Mammary epithelial cell (primary cell): ENCODE measurements at regions of chr11 and their contacts with region 1.

Region 1: DNA sequence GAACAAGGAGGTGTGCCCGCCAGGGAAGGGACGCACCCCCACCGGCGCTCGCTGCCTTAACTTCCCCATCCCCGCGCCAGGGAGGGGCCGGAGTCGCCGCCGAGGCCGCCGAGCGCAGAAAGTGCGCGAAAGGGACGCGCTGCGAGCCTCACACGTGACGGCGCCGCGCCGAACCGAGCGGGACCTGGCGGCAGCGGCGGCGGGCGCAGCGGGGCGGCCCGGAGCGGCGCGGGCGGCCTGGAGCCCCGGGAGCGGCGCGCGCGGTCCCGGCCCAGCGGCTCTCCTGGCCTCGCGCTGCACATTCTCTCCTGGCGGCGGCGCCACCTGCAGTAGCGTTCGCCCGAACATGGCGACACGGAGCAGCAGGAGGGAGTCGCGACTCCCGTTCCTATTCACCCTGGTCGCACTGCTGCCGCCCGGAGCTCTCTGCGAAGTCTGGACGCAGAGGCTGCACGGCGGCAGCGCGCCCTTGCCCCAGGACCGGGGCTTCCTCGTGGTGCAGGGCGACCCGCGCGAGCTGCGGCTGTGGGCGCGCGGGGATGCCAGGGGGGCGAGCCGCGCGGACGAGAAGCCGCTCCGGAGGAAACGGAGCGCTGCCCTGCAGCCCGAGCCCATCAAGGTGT is at the start of gene SORL1:
- DNase-seq: peak; percentile 67
- H3K4me3 ChIP-seq: peak within 1 kb of the TSS; percentile 59 to 79 (median 77)
- H3K27ac ChIP-seq: peak within 1 kb of the TSS; percentile 5
- H3K4me1 ChIP-seq: peaks cover 9% of the 10 kb centered on the region
- H3K27me3 ChIP-seq: no peaks in the 10 kb centered on the region
- CTCF ChIP-seq: peak; percentile 54 to 77
- total RNA-seq, gene SORL1: 17.5 to 84.3 TPM

Region 2: GRCh38 chr11:121318848-121319834 is 133.0 kb before region 1 on chr11:
- CTCF ChIA-PET with region 1: no interaction called
- dilution Hi-C with region 1: no loop called
- in situ Hi-C with region 1: loop called in 1 of 2 experiments (anchors 10 kb)
- intact Hi-C with region 1: loop called (anchors 1 kb)
- DNase-seq: peak; percentile 49
- H3K4me3 ChIP-seq: no peak overlapping the region
- H3K27ac ChIP-seq: no peak overlapping the region
- H3K4me1 ChIP-seq: peaks cover 4% of the 10 kb centered on the region
- H3K27me3 ChIP-seq: no peaks in the 10 kb centered on the region
- CTCF ChIP-seq: peak; percentile 79 to 89

Region 3: DNA sequence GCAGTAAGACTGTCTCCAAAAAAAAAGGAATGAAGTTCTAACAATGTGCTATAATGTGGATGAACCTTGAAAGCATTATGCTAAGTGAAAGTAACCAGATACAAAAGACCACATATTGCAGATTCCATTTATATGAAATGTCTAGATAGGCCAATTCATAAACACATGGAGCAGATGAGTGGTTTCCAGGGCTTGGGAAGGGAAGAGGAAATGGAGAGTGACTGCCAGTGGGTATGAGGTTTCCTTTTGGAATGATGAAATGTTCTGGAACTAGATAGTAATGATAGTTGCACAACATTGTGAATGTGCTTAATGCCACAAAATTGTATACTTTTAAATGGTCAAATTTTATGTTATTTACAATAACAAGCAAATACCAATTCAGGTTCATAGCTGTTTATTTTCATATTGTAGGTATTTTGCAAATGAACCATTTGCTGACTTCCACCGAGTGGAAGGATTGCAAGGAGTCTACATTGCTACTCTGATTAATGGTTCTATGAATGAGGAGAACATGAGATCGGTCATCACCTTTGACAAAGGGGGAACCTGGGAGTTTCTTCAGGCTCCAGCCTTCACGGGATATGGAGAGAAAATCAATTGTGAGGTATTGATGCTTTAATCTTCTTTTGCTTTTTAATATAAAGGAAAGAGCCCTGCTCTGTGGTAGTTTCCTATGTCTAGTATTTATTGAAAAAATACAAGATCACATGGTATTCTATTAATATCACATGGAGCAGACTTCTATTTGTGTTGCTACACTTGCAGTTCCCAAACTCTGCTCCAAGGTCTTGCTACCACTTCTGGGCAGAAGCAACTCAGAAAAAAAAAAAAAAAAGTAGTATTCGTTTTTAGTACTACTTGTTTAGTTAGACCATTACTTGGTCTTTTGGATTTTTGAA is 68.4 kb after region 1 on chr11:
- CTCF ChIA-PET with region 1: no interaction called
- dilution Hi-C with region 1: no loop called
- in situ Hi-C with region 1: no loop called
- intact Hi-C with region 1: loop called (anchors 2 kb)
- DNase-seq: peak; percentile 68
- H3K4me3 ChIP-seq: no peak overlapping the region
- H3K27ac ChIP-seq: peak overlapping the region; percentile 86
- H3K4me1 ChIP-seq: peaks cover 29% of the 10 kb centered on the region
- H3K27me3 ChIP-seq: no peaks in the 10 kb centered on the region
- CTCF ChIP-seq: no peak

Region 4: DNA sequence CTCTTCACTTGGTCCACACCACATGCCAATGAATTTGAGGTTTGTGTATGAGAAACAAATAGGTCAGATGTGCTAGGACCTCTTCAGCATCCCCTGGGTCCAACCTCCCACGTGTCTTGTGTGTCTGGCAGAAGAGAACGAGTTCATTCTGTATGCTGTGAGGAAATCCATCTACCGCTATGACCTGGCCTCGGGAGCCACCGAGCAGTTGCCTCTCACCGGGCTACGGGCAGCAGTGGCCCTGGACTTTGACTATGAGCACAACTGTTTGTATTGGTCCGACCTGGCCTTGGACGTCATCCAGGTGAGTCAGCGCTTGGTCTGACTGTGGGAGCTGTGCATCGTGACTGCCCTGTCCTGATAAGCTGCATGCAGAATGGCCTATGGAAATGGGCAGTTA is 101.7 kb after region 1 on chr11:
- CTCF ChIA-PET with region 1: no interaction called
- dilution Hi-C with region 1: no loop called
- in situ Hi-C with region 1: loop called in 1 of 2 experiments (anchors 10 kb)
- intact Hi-C with region 1: loop called (anchors 1 kb)
- DNase-seq: peak; percentile 63
- H3K4me3 ChIP-seq: no peak overlapping the region
- H3K27ac ChIP-seq: no peak overlapping the region
- H3K4me1 ChIP-seq: peaks cover 49% of the 10 kb centered on the region
- H3K27me3 ChIP-seq: no peaks in the 10 kb centered on the region
- CTCF ChIP-seq: no peak

Region 5: GRCh38 chr11:122159173-122159721 is 707.1 kb after region 1 on chr11:
- CTCF ChIA-PET with region 1: no interaction called
- dilution Hi-C with region 1: no loop called
- in situ Hi-C with region 1: loop called in 1 of 2 experiments (anchors 25 kb)
- intact Hi-C with region 1: no loop called
- DNase-seq: peak; percentile 52
- H3K4me3 ChIP-seq: peak overlapping the region; percentile 25 to 65 (median 37)
- H3K27ac ChIP-seq: peak overlapping the region; percentile 95
- H3K4me1 ChIP-seq: peaks cover 69% of the 10 kb centered on the region
- H3K27me3 ChIP-seq: no peaks in the 10 kb centered on the region
- CTCF ChIP-seq: no peak